RWPE1 (cell line): ENCODE measurements at regions of chr13 and their contacts with region 1.

Region 1: DNA sequence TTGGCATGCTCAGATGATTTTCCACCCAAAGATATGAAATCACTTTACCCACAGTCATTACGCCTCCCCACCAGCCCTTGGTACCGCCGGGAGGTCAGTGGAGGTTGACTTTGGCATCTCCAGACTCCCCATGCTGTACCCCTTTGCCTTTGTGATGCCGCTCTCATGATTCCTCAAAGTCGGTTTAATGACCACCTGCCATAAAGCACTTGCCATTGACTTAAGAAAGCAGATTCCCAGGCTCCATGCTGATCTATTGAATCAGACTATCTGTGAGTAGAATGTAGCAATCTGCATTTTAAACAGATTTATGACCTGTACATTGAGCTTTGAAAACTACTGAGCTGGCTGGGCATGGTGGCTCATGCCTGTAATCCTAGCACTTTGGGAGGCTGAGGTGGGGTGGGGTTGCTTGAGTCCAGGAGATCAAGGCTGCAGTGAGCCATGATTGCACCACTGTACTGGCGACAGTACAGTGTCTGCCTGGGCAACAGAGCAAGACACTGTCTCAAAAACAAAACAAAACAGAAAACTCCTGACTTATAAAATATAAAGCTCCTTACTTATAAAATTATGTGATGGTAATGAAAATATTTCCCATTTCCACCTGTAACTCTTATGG is 235.2 kb downstream of the KLF5 start:
- DNase-seq: no peak
- H3K27ac ChIP-seq: no peak overlapping the region
- CTCF ChIP-seq: no peak

Region 2: GRCh38 chr13:73428716-73429115 is 134.7 kb after region 1 on chr13:
- CTCF ChIA-PET with region 1: no interaction called
- POLR2A ChIA-PET with region 1: interaction called, 10 read pairs
- DNase-seq: no peak
- H3K27ac ChIP-seq: peak overlapping the region; percentile 93
- CTCF ChIP-seq: no peak

Region 3: GRCh38 chr13:73440296-73440895 is 146.4 kb after region 1 on chr13:
- CTCF ChIA-PET with region 1: no interaction called
- POLR2A ChIA-PET with region 1: no interaction called
- DNase-seq: no peak
- H3K27ac ChIP-seq: no peak overlapping the region
- CTCF ChIP-seq: no peak